ENCODE measurements at regions of chr19 and their contacts with region 1.

Region 1: GRCh38 chr19:3618144-3618810 is 8.3 kb downstream of the CACTIN start:
- DNase-seq: peak; percentile 37
- H3K4me3 ChIP-seq: no peak overlapping the region
- H3K27ac ChIP-seq: no peak overlapping the region
- H3K4me1 ChIP-seq: no peaks in the 10 kb centered on the region
- CTCF ChIP-seq: peak; percentile 85

Region 2: DNA sequence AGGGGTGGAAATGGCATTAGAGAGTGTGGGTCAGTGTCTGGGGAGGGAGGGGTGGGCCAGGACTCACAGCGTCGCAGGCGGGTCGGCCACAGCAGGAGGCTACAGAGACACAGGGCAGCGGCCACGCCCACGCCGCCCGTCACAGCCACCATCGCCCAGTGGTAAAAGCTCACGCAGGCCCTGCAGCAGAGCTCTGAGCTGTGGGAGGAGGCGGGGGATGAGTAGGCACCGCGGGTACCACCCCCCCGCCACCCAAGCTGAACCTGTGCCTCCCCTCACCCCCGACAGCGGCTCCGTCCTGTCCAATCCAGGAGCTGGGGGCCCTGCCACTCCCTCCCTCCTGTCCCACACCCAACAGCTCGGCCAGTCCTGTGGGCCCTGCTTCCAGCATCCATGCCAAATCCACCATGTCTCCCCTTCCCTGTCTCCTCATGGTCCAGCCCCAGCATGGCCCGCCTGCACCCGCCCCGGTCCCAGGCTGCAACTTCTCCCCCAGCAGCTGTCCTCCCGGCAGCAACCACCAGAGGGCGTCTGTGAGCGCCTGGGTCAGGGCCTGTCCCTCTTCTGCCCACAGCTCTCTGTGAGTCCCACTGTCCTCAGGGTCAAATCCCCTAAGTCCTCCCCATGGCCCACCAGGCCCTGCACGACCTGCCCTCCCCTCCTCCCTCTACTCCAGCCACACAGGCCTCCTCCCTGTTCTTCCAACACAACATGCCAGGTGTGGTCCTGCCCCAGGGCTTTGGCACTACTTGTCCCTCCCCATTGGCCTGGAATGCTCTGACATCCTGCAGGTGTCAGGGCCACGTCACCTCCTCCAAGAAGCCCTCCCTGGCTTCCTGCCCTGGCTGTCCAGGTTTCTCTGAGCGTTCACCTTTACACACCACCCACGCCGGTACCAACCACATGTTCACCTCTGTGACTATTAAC is 73.3 kb before region 1 on chr19:
- CTCF ChIA-PET with region 1: interaction called, 4 read pairs
- POLR2A ChIA-PET with region 1: interaction called, 3 read pairs
- intact Hi-C with region 1: loop called (anchors 5 kb)
- DNase-seq: peak; percentile 58
- H3K4me3 ChIP-seq: no peak overlapping the region
- H3K27ac ChIP-seq: no peak overlapping the region
- H3K4me1 ChIP-seq: no peaks in the 10 kb centered on the region
- CTCF ChIP-seq: peak; percentile 88

Measured in OCI-LY7 (cell line).